Ovary (tissue), 10 donors: ENCODE measurements at regions of chr13 and their contacts with region 1.

Region 1: DNA sequence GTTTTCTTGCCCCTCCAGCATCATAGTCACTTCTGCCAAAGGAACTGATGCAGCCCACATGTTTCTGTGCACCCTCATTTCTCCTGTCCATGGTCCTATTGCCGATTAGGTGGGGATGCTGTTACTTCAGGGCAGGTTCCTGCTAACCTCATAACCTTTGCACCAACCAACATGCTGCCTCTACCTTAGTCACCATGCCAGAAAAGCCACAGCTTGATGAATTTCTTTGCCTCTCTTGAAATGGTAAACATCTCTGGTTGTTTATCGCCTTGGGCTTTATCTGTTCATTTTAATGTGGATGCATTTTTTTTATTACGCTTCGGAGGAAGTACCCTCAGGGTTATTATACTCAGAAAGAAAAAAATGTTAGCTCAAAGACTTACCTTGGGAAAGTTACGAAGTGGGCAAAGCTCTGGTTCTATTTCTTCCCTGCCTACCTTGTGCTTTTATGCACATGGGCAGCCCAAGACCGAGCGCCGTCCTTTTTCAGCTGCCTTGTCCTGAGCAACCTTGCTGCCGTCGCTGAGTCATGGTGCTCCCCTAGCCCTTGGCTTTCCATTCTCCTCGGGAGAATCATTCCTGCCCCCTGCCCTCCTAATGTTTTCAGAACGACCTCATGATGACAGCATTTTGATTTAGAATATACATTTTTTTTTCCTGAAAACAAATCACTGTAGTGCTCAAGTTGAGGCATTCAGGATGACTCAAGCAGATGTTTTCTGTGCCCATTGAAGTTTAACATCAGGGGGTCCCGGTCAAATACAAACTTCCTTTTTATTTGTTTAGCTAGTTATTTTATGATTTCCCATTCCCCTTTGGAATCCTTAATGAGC is 280.0 kb downstream of the SHISA2 start:
- DNase-seq: no peak
- H3K4me3 ChIP-seq: no peak overlapping the region
- H3K27ac ChIP-seq: no peak overlapping the region
- H3K4me1 ChIP-seq: no peaks in the 10 kb centered on the region
- H3K27me3 ChIP-seq: no peaks in the 10 kb centered on the region
- CTCF ChIP-seq: no peak
- EP300 ChIP-seq: no peak
- POLR2A ChIP-seq: no peak

Region 2: DNA sequence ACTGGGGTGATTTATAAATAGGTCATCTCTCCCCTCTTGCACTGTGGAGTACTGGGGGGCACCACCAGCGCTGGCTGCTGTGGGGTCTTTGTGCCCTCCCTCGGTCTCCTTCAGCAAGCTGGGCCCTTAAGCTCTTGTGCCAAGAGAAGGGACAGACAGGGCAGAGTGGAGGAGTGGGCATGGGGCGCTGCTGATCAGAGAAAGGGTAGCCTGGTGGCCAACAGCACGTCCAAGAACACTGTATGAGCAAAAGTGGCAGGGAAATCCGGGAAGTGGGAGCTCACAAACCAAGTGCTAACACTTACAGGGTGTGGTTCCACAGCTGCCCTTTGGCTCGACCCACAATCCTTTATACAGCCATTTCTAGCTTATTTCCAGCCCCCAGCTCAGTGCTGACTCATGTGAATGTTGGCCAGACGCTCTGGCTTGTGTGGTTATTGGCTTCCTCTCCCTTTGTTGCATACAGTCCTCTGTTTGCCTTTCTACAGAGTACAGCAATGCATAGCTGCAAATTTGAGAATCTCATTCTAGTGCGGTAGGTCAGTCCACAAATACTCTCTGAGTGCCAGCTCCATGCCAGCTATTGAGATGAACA is 18.8 kb before region 1 on chr13:
- intact Hi-C with region 1: loop called in 1 of 4 experiments (anchors 2 kb)
- DNase-seq: peak in 1 of 5 donors; percentile 28
- H3K4me3 ChIP-seq: no peak overlapping the region
- H3K27ac ChIP-seq: no peak overlapping the region
- H3K4me1 ChIP-seq: no peaks in the 10 kb centered on the region
- H3K27me3 ChIP-seq: no peaks in the 10 kb centered on the region
- CTCF ChIP-seq: no peak
- EP300 ChIP-seq: no peak
- POLR2A ChIP-seq: no peak